Left colon (tissue), 2 donors: ENCODE measurements at regions of chr5 and their contacts with region 1.

Region 1: GRCh38 chr5:128213340-128213739 is 129.8 kb downstream of the SLC12A2 start:
- DNase-seq: peak in 1 of 2 donors; percentile 45
- ATAC-seq: peak; percentile 50

Region 2: GRCh38 chr5:128163991-128164390 is 49.3 kb before region 1 on chr5:
- intact Hi-C with region 1: no loop called
- DNase-seq: no peak
- ATAC-seq: peak; percentile 38

Region 3: GRCh38 chr5:128276537-128277216 is 63.3 kb after region 1 on chr5:
- intact Hi-C with region 1: no loop called
- DNase-seq: no peak
- ATAC-seq: no peak

Region 4: GRCh38 chr5:128498844-128499455 is 285.6 kb after region 1 on chr5:
- intact Hi-C with region 1: loop called (anchors 2 to 10 kb)
- DNase-seq: peak in 1 of 2 donors; percentile 6
- ATAC-seq: no peak

Region 5: DNA sequence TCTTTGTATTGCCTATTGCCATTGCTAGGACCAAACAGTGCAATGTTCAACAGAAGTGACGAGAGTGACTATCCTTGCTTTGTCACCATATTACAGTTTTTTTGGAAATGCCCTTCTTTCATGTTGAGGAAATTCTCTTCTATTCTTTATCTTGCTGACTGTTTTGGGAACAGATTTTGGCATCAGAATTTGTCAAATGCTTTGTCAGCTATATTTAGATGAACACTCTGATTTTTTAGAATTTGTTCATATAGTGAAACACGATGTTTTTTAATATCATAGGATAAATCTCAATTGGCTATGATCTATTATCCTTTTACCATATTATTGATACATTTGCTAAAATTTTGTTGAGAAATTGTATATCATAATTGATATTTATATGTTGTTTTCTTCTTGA is 293.3 kb after region 1 on chr5:
- intact Hi-C with region 1: loop called in 1 of 2 experiments (anchors 10 kb)
- DNase-seq: no peak
- ATAC-seq: no peak

Region 6: GRCh38 chr5:128844354-128844923 is 631.1 kb after region 1 on chr5:
- intact Hi-C with region 1: loop called in 1 of 2 experiments (anchors 5 kb)
- DNase-seq: no peak
- ATAC-seq: no peak